ENCODE measurements at regions of chr13 and their contacts with region 1.

Region 1: DNA sequence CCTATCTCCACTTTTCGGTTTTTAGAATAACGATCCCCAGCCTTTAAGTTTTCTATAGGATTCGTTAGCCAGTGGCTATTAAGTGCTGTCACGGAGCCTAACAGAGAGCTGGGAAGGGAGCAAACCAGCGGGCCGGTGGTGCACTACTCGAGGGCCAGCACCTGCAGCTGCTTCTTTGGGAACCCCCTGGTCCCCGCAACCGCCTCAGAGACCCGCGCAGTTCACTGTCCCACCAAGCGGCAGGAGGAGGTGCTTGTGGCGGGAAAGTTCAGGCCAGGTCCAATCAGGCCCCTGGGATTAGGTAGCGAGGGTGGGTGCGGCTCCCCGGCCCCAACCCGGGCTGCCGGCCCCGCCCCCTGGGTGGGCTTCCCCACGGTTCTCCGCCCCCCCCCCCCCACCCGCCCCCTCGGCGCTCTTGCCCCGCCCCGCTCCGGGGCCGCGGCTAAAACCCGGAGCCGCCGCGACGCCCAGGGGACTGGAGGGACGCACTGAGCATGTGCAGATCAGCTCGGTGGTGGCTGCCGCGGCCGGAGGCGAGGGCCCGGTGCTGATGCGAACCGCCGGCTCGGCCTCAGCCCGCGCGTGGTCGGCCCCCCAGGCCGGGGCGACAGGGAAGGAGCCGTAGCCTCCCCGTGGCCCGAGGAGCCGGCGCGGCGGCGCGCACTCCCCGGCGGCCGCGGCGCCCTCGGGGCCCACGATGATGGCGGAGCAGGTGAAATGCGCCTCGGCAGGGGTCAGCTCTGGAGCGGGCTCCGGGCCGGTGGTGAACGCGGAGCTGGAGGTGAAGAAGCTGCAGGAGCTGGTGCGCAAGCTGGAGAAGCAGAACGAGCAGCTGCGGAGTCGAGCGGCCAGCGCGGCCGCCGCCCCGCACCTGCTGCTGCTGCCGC is at the start of gene SLAIN1:
- DNase-seq: peak; percentile 99

Region 2: GRCh38 chr13:77720988-77721387 is 23.5 kb after region 1 on chr13:
- CTCF ChIA-PET with region 1: no interaction called
- POLR2A ChIA-PET with region 1: interaction called, 13 read pairs
- DNase-seq: no peak